Activated naive CD4-positive, alpha-beta T cell treated with anti-CD3 and anti-CD28 coated beads for 36 hours (primary cell): ENCODE measurements at regions of chr2 and their contacts with region 1.

Region 1: GRCh38 chr2:16727256-16727655 is 61.6 kb upstream of the CYRIA start:
- DNase-seq: no peak
- H3K4me3 Mint-ChIP-seq: no peak overlapping the region
- H3K27ac Mint-ChIP-seq: no peak overlapping the region
- H3K4me1 Mint-ChIP-seq: peaks cover 27% of the 10 kb centered on the region
- H3K27me3 Mint-ChIP-seq: peaks cover 23% of the 10 kb centered on the region

Region 2: GRCh38 chr2:16506320-16506719 is 220.9 kb before region 1 on chr2:
- CTCF ChIA-PET with region 1: no interaction called
- intact Hi-C with region 1: no loop called
- DNase-seq: no peak
- H3K4me3 Mint-ChIP-seq: no peak overlapping the region
- H3K27ac Mint-ChIP-seq: no peak overlapping the region
- H3K4me1 Mint-ChIP-seq: no peaks in the 10 kb centered on the region
- H3K27me3 Mint-ChIP-seq: peaks cover 52% of the 10 kb centered on the region

Region 3: GRCh38 chr2:16656784-16657391 is 70.4 kb before region 1 on chr2:
- CTCF ChIA-PET with region 1: no interaction called
- intact Hi-C with region 1: no loop called
- DNase-seq: no peak
- H3K4me3 Mint-ChIP-seq: no peak overlapping the region
- H3K27ac Mint-ChIP-seq: no peak overlapping the region
- H3K4me1 Mint-ChIP-seq: no peaks in the 10 kb centered on the region
- H3K27me3 Mint-ChIP-seq: peaks cover 8% of the 10 kb centered on the region

Region 4: GRCh38 chr2:16713011-16713423 is 14.2 kb before region 1 on chr2:
- CTCF ChIA-PET with region 1: no interaction called
- intact Hi-C with region 1: no loop called
- DNase-seq: no peak
- H3K4me3 Mint-ChIP-seq: no peak overlapping the region
- H3K27ac Mint-ChIP-seq: no peak overlapping the region
- H3K4me1 Mint-ChIP-seq: no peaks in the 10 kb centered on the region
- H3K27me3 Mint-ChIP-seq: peaks cover 16% of the 10 kb centered on the region

Region 5: DNA sequence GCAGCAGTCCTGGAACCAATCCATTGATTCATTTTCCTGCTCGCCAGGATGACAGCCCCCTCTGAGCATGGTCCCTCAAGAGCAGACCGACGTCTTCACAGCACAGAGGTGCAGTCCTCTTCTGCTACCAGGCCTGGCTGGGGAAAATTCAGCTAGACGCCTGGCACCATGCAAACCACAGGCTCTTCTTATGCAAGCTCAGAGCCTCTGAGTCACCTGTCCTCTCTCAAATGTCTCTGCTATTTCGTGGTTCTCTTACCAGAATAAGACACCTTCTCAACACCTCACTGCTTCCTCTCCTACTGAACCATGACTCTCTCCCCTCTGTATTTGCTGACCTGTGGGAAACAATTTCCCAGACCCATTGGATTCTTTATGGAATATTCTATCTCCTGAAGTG is 18.2 kb after region 1 on chr2:
- CTCF ChIA-PET with region 1: no interaction called
- intact Hi-C with region 1: loop called (anchors 1 kb)
- DNase-seq: peak; percentile 43
- H3K4me3 Mint-ChIP-seq: no peak overlapping the region
- H3K27ac Mint-ChIP-seq: no peak overlapping the region
- H3K4me1 Mint-ChIP-seq: peaks cover 29% of the 10 kb centered on the region
- H3K27me3 Mint-ChIP-seq: peaks cover 20% of the 10 kb centered on the region